ENCODE measurements at regions of chr17 and their contacts with region 1.

Region 1: DNA sequence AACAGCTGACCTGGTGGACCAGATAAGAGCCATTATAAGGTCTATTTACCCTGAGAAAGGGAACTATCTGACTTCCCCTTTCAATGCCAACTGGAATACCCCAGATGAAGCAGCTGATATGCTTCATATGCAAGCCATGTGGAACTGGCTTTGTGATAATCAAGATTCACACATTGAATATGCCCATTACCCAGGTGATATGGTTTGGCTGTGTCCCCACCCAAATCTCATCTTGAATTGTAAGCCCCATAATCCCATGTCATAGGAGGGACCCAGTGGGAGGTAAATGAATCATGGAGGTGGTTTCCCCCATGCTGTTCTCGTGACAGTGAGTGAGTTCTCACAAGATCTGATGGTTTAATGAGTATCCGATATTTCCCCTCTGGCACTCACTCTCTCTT is 42.1 kb downstream of the IKZF3 start:
- DNase-seq: peak in 1 of 5 donors; percentile 44
- H3K4me3 ChIP-seq: no peak overlapping the region
- H3K4me3 Mint-ChIP-seq: no peak overlapping the region
- H3K27ac ChIP-seq: peak overlapping the region; percentile 66
- H3K27ac Mint-ChIP-seq: peak overlapping the region; percentile 81 to 98 (median 94)
- H3K4me1 ChIP-seq: peaks cover 51% of the 10 kb centered on the region
- H3K4me1 Mint-ChIP-seq: peaks cover 36 to 61% (median 45%) of the 10 kb centered on the region in 4 donors
- H3K27me3 ChIP-seq: no peaks in the 10 kb centered on the region
- H3K27me3 Mint-ChIP-seq: no peaks in the 10 kb centered on the region

Region 2: GRCh38 chr17:39591958-39592954 is 229.8 kb before region 1 on chr17:
- CTCF ChIA-PET with region 1: no interaction called
- POLR2A ChIA-PET with region 1: no interaction called
- intact Hi-C with region 1: no loop called
- DNase-seq: peak in 1 of 5 donors; percentile 24
- H3K4me3 ChIP-seq: no peak overlapping the region
- H3K4me3 Mint-ChIP-seq: no peak overlapping the region
- H3K27ac ChIP-seq: no peak overlapping the region
- H3K27ac Mint-ChIP-seq: peak overlapping the region in 1 of 7 donors; percentile 71
- H3K4me1 ChIP-seq: peaks cover 5% of the 10 kb centered on the region
- H3K4me1 Mint-ChIP-seq: peaks cover under 1 to 13% (median 6%) of the 10 kb centered on the region in 4 donors
- H3K27me3 ChIP-seq: peaks cover 20% of the 10 kb centered on the region
- H3K27me3 Mint-ChIP-seq: peaks cover 53 to 59% of the 10 kb centered on the region in 2 donors

Region 3: DNA sequence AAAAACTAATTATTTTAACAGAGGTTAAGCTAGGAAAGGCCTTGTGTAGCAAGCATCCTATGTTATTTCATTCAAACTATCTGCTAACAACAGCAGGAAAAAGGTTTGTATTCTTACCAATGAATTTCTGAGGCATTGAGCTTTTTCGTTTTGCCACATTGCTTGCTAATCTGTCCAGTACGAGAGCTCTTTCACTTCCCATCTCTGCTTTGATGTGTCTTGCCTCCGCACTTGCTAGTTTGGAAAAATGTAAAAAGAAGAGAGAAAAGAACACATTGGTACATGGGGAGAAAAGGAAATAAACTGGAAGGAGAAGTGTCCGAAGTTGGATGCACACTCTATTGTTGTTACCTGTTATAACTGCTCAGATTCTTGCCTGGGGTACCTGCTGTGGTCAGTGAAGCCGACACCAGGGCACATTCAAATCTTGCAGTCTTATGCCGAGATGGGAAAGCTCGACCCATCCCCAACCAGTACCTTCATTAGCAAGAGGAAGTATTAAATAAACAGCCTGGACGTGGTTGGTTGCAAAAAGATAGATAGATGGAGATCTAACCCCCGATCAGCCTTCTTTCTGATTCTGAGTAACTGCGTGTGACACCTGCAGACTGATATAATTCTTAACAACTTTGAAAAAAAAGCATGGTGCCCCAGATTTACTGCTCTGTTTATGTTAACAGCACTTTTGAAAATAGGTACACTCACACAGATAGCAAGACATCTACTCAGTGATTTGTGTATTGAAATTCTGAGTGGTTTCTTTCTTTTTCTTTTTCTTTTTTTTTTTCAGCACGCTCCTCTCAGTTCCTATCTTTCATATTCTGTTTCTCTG is 44.3 kb before region 1 on chr17:
- CTCF ChIA-PET with region 1: interaction called, 43 read pairs
- POLR2A ChIA-PET with region 1: interaction called, 50 read pairs
- intact Hi-C with region 1: no loop called
- DNase-seq: peak in 4 of 5 donors; percentile 34 to 57 (median 48)
- H3K4me3 ChIP-seq: peak overlapping the region; percentile 64 to 74
- H3K4me3 Mint-ChIP-seq: peak overlapping the region; percentile 93 to 99 (median 96)
- H3K27ac ChIP-seq: peak overlapping the region; percentile 77
- H3K27ac Mint-ChIP-seq: peak overlapping the region; percentile 89 to 98 (median 95)
- H3K4me1 ChIP-seq: peaks cover 84% of the 10 kb centered on the region
- H3K4me1 Mint-ChIP-seq: peaks cover 51 to 88% (median 69%) of the 10 kb centered on the region in 4 donors
- H3K27me3 ChIP-seq: no peaks in the 10 kb centered on the region
- H3K27me3 Mint-ChIP-seq: no peaks in the 10 kb centered on the region

Region 4: DNA sequence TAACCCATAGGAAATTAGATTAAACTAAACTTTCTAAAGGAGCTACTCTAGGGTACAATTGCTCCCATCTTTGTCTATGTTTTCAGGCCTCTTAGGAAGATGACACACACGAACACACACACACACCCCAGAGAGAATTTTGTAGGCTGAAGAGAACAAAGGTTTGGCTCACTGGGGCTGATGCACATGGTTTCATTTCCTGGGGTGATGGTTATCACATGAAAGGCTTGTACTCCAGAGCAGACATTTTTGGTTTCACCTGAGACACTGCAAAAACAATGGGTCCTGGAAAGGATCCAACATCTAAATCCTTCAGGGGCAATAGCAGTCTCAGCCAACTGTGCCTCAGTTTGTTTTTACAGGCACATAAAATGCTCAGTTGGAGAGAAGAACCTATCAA is 21.5 kb before region 1 on chr17:
- CTCF ChIA-PET with region 1: interaction called, 7 read pairs
- POLR2A ChIA-PET with region 1: interaction called, 64 read pairs
- intact Hi-C with region 1: loop called (anchors 2 kb)
- DNase-seq: peak; percentile 67 to 83 (median 71)
- H3K4me3 ChIP-seq: peak overlapping the region in 1 of 2 donors; percentile 12
- H3K4me3 Mint-ChIP-seq: peak overlapping the region in 7 of 8 donors; percentile 13 to 81 (median 63)
- H3K27ac ChIP-seq: peak overlapping the region; percentile 50
- H3K27ac Mint-ChIP-seq: peak overlapping the region; percentile 79 to 96 (median 91)
- H3K4me1 ChIP-seq: peaks cover 43% of the 10 kb centered on the region
- H3K4me1 Mint-ChIP-seq: peaks cover 42 to 63% (median 52%) of the 10 kb centered on the region in 4 donors
- H3K27me3 ChIP-seq: no peaks in the 10 kb centered on the region
- H3K27me3 Mint-ChIP-seq: no peaks in the 10 kb centered on the region

Region 5: DNA sequence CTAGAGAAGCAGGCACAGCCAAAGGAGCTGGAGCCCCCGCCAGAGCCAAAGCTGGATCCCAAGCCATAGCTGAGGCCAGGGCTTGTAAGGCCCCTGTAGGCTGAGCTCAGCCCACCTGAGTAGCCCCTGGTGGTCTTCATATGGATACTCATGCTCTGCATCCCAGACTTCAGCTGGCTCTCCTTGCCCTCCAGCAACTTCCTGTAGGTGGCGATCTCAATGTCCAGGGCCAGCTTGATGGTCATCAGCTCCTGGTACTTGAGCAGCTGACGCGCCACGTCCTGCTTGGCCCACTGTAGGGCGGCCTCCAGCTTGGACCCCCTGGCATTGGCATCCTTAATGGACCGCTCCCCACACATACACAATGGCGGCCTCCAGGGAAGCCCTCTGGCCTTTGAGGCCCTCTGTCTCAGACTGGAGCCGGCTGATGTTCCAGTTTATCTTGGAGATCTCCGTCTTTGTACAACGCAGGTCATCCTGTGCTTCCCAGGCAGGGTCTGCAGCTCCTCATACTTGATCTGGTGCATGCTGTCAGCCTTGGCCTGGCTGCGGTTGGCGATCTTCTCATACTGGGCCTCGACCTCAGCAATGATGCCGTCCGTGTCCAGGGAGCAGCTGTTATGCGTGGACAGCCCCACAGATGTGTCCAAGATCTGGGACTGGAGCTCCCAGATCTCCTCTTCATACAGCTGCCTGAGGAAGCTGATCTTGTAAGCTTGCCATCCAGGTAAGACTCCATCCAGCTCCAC is 13.2 kb after region 1 on chr17:
- CTCF ChIA-PET with region 1: interaction called, 5 read pairs
- POLR2A ChIA-PET with region 1: interaction called, 17 read pairs
- intact Hi-C with region 1: no loop called
- DNase-seq: no peak
- H3K4me3 ChIP-seq: no peak overlapping the region
- H3K4me3 Mint-ChIP-seq: no peak overlapping the region
- H3K27ac ChIP-seq: no peak overlapping the region
- H3K27ac Mint-ChIP-seq: peak overlapping the region in 1 of 7 donors; percentile 88
- H3K4me1 ChIP-seq: no peaks in the 10 kb centered on the region
- H3K4me1 Mint-ChIP-seq: peaks cover 13 to 32% (median 21%) of the 10 kb centered on the region in 4 donors
- H3K27me3 ChIP-seq: no peaks in the 10 kb centered on the region
- H3K27me3 Mint-ChIP-seq: no peaks in the 10 kb centered on the region

Region 6: GRCh38 chr17:39950871-39951348 is 128.9 kb after region 1 on chr17:
- CTCF ChIA-PET with region 1: no interaction called
- POLR2A ChIA-PET with region 1: no interaction called
- intact Hi-C with region 1: no loop called
- DNase-seq: no peak
- H3K4me3 ChIP-seq: no peak overlapping the region
- H3K4me3 Mint-ChIP-seq: no peak overlapping the region
- H3K27ac ChIP-seq: no peak overlapping the region
- H3K27ac Mint-ChIP-seq: no peak overlapping the region
- H3K4me1 ChIP-seq: peaks cover 12% of the 10 kb centered on the region
- H3K4me1 Mint-ChIP-seq: peaks cover 8 to 23% (median 11%) of the 10 kb centered on the region in 4 donors
- H3K27me3 ChIP-seq: no peaks in the 10 kb centered on the region
- H3K27me3 Mint-ChIP-seq: no peaks in the 10 kb centered on the region